Mammary epithelial cell (primary cell): ENCODE measurements at regions of chr14 and their contacts with region 1.

Region 1: DNA sequence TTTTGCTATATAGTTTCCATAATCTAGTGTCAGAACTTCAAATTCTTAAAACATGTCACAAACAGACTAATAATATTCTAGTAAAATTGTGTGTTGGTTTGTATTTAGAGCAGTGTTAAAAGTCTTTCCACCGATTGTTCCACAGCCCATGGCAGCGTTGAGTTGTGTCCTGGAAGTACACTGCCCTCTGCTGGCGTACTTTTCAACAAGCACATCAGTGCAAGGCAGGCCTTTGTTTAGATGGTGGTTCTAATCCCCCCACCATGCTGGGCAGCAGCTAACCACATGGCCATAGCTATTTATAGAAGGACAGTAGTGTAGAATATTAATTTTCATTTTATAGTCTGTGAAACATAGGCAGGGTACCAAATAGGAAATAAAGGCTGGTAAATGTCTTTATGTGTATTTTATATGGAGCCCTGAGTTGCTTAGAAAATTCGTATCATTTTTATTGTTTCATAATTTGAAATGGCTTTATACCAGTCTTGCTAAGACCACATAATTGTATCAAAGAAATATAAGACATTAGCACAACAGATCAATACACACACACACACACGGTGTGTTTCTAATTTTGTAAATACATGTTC is 235.4 kb downstream of the SEC23A start:
- DNase-seq: peak; percentile 42
- H3K4me3 ChIP-seq: no peak overlapping the region
- H3K27ac ChIP-seq: no peak overlapping the region
- H3K4me1 ChIP-seq: no peaks in the 10 kb centered on the region
- H3K27me3 ChIP-seq: no peaks in the 10 kb centered on the region
- CTCF ChIP-seq: peak; percentile 86 to 88

Region 2: GRCh38 chr14:37985826-37986470 is 881.7 kb before region 1 on chr14:
- CTCF ChIA-PET with region 1: no interaction called
- dilution Hi-C with region 1: no loop called
- in situ Hi-C with region 1: no loop called
- intact Hi-C with region 1: loop called (anchors 5 kb)
- DNase-seq: no peak
- H3K4me3 ChIP-seq: no peak overlapping the region
- H3K27ac ChIP-seq: no peak overlapping the region
- H3K4me1 ChIP-seq: no peaks in the 10 kb centered on the region
- H3K27me3 ChIP-seq: no peaks in the 10 kb centered on the region
- CTCF ChIP-seq: peak; percentile 28 to 42

Region 3: GRCh38 chr14:38721822-38722431 is 145.7 kb before region 1 on chr14:
- CTCF ChIA-PET with region 1: interaction called, 6 read pairs
- dilution Hi-C with region 1: no loop called
- in situ Hi-C with region 1: no loop called
- intact Hi-C with region 1: loop called (anchors 1 kb)
- DNase-seq: peak; percentile 32
- H3K4me3 ChIP-seq: no peak overlapping the region
- H3K27ac ChIP-seq: no peak overlapping the region
- H3K4me1 ChIP-seq: no peaks in the 10 kb centered on the region
- H3K27me3 ChIP-seq: no peaks in the 10 kb centered on the region
- CTCF ChIP-seq: peak; percentile 78 to 86